Right cardiac atrium (tissue), 5 donors: ENCODE measurements at regions of chr1 and their contacts with region 1.

Region 1: GRCh38 chr1:112955781-112956543 is at the start of gene SLC16A1:
- DNase-seq: peak; percentile 95 to 98 (median 97)
- ATAC-seq: peak; percentile 97
- H3K4me3 ChIP-seq: peak within 1 kb of the TSS; percentile 55
- H3K27ac ChIP-seq: peak within 1 kb of the TSS; percentile 83
- H3K4me1 ChIP-seq: peaks cover 3% of the 10 kb centered on the region
- H3K27me3 ChIP-seq: no peaks in the 10 kb centered on the region
- total RNA-seq, gene SLC16A1: 62.7 to 123 (median 68.6) TPM

Region 2: DNA sequence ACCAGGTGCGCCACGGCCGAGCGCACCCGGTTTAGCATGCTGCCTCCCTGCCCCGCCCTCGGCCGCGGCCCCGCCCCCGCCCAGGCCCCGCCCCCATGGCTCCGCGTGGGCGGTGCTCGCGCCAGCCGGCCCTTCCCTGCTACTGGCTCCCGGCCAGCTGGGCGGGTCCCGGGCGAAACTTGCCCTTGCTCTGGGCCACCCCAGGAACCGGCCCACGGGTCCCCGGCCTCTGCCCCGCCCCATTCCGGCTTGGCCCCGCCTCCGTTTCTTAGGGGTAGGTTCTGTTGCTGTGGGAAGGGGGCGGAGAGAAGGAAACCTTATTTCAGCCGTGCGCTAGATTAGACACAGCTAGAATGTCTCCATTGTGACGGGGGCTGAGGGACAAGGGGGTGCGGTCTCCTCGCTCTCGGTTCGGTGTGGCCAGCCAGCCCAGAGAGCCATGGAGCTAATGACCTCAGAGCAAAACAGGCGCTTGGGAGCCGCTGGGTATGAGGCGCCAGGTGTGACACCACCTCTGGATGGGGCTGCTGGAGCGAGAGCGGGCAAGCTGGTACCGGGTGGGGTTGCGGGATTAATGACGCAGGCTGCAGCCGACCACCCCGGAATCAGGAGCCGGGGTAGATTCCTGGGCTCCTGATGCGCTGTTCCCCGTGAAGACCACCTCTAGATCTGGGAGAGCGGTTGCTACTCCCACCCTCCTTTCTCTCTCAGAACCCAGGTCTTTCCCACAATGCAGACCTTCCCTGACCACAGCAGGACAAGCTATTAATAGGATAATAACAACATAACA is 240.5 kb before region 1 on chr1 and contains the start of gene PPM1J:
- intact Hi-C with region 1: no loop called
- DNase-seq: peak; percentile 99 to 100 (median 100)
- ATAC-seq: peak; percentile 92
- H3K4me3 ChIP-seq: peak within 1 kb of the TSS; percentile 69
- H3K27ac ChIP-seq: peak within 1 kb of the TSS; percentile 32
- H3K4me1 ChIP-seq: no peaks in the 10 kb centered on the region
- H3K27me3 ChIP-seq: no peaks in the 10 kb centered on the region
- total RNA-seq, gene PPM1J: 5.5 to 9.0 (median 6.3) TPM

Region 3: DNA sequence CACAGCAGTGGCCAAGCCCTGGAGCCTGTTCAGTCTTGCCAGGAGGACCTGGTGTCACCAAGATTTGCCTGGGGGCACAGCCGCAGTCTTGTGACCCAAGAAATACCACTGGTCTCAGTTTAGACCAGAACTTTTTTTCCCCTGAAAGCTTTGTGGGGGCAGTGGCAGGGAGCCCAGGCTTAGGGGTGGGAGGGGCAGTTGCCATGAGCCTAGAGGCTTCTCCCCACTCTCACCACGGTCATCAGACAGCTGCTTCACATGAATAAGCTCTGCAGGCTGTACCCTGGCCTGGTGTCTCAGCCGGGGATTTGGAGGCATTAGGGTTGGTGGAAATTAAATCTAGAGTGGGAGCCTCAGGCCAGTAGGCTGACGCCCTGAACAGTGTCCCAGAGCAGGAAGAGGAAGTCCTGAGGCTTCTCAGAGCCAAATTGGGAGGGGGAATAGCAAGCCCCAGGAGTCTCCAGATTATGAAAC is 73.7 kb before region 1 on chr1:
- intact Hi-C with region 1: loop called in 1 of 4 experiments (anchors 2 kb)
- DNase-seq: peak in 1 of 3 donors; percentile 58
- ATAC-seq: peak; percentile 61 to 65
- H3K4me3 ChIP-seq: no peak overlapping the region
- H3K27ac ChIP-seq: peak overlapping the region; percentile 61
- H3K4me1 ChIP-seq: no peaks in the 10 kb centered on the region
- H3K27me3 ChIP-seq: no peaks in the 10 kb centered on the region